CD14-positive monocyte (primary cell): ENCODE measurements at regions of chr7 and their contacts with region 1.

Region 1: GRCh38 chr7:57362868-57363267 is 87.1 kb upstream of the ZNF716 start:
- DNase-seq: no peak
- H3K4me3 ChIP-seq: no peak overlapping the region
- H3K4me3 Mint-ChIP-seq: no peak overlapping the region
- H3K27ac ChIP-seq: no peak overlapping the region
- H3K27ac Mint-ChIP-seq: no peak overlapping the region
- H3K4me1 ChIP-seq: no peaks in the 10 kb centered on the region
- H3K4me1 Mint-ChIP-seq: no peaks in the 10 kb centered on the region
- H3K27me3 ChIP-seq: no peaks in the 10 kb centered on the region
- H3K27me3 Mint-ChIP-seq: no peaks in the 10 kb centered on the region
- CTCF ChIP-seq: no peak

Region 2: DNA sequence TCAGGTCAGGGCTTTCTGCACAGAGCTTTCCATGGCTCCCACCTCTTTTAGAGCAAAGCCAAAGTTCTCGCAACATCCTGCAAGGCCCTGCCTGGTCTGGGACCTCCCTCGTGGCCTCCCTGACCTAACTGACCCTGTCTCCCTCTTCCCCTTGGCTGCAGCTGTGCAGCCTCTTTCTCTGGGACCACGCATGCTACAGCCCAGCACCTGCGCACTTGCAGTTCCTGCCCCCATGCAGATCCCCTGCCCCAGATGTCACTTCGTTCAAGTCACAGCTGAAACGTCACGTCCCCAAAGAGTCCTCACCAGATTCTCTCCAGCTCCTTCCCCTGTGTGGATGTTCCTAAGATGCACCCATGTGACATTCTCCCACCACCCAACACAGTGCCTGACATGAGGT is 25.9 kb after region 1 on chr7:
- intact Hi-C with region 1: loop called in 1 of 2 experiments (anchors 2 kb)
- DNase-seq: no peak
- H3K4me3 ChIP-seq: no peak overlapping the region
- H3K4me3 Mint-ChIP-seq: no peak overlapping the region
- H3K27ac ChIP-seq: no peak overlapping the region
- H3K27ac Mint-ChIP-seq: no peak overlapping the region
- H3K4me1 ChIP-seq: no peaks in the 10 kb centered on the region
- H3K4me1 Mint-ChIP-seq: no peaks in the 10 kb centered on the region
- H3K27me3 ChIP-seq: no peaks in the 10 kb centered on the region
- H3K27me3 Mint-ChIP-seq: peaks cover 0 to 3% (median 0%) of the 10 kb centered on the region in 3 donors
- CTCF ChIP-seq: no peak